A673 (cell line): ENCODE measurements at regions of chr13 and their contacts with region 1.

Region 1: DNA sequence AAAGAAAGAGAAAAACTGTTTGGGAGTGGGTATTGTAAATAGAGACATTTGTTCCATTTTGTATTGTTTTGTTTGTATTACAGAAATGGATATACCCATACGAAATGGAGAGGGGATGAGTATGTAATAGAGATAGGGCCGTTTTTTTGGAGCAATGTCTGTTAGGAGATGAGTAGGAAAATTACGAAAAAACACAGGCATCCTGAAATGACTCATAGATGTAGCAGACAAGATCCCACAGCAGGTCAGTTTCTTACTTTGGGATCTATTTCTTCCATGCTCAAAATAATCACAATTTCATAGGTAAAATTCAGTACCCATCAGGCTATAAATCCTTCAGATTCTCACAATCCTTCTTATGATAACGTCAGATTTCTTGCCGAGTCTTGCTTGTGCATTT is 779.4 kb upstream of the SLITRK1 start:
- DNase-seq: no peak
- H3K4me3 ChIP-seq: no peak overlapping the region
- H3K27ac ChIP-seq: no peak overlapping the region
- H3K4me1 ChIP-seq: peaks cover 8% of the 10 kb centered on the region
- H3K27me3 ChIP-seq: no peaks in the 10 kb centered on the region
- CTCF ChIP-seq: no peak

Region 2: GRCh38 chr13:84834201-84834600 is 172.5 kb after region 1 on chr13:
- CTCF ChIA-PET with region 1: no interaction called
- POLR2A ChIA-PET with region 1: no interaction called
- intact Hi-C with region 1: no loop called
- DNase-seq: no peak
- H3K4me3 ChIP-seq: no peak overlapping the region
- H3K27ac ChIP-seq: no peak overlapping the region
- H3K4me1 ChIP-seq: no peaks in the 10 kb centered on the region
- H3K27me3 ChIP-seq: no peaks in the 10 kb centered on the region
- CTCF ChIP-seq: no peak

Region 3: DNA sequence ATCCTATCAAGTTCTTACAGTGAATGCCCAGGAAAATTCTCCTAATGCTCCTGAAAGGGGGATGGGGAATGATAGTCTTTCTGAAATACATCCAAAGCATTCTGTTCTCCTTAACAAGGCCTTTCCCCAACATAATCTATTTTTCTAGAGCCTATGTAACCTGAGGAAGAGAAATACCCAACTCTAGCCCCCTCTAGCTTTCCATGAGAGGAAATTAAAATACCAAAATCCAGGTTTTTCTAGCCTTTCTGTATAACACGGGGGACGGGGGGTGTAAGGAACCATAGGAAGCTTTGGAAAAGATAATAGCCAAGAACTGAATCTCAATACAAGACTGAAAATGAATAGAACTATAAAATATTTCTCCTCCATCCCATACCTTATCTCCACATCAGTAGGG is 321.6 kb after region 1 on chr13:
- CTCF ChIA-PET with region 1: no interaction called
- POLR2A ChIA-PET with region 1: no interaction called
- intact Hi-C with region 1: loop called (anchors 5 kb)
- DNase-seq: no peak
- H3K4me3 ChIP-seq: no peak overlapping the region
- H3K27ac ChIP-seq: no peak overlapping the region
- H3K4me1 ChIP-seq: peaks cover 7% of the 10 kb centered on the region
- H3K27me3 ChIP-seq: no peaks in the 10 kb centered on the region
- CTCF ChIP-seq: no peak